Left ventricle myocardium superior (tissue), 1 donor: ENCODE measurements at regions of chr19 and their contacts with region 1.

Region 1: GRCh38 chr19:28466107-28467045 is 746.6 kb downstream of the UQCRFS1 start:
- DNase-seq: peak; percentile 74
- ATAC-seq: peak; percentile 50

Region 2: GRCh38 chr19:28633319-28634018 is 167.1 kb after region 1 on chr19:
- intact Hi-C with region 1: loop called (anchors 10 kb)
- DNase-seq: peak; percentile 56
- ATAC-seq: peak; percentile 67

Region 3: GRCh38 chr19:28710278-28710677 is 243.9 kb after region 1 on chr19:
- intact Hi-C with region 1: loop called (anchors 2 kb)
- DNase-seq: no peak
- ATAC-seq: no peak

Region 4: GRCh38 chr19:28878862-28879566 is 412.6 kb after region 1 on chr19:
- intact Hi-C with region 1: loop called (anchors 5 kb)
- DNase-seq: peak; percentile 73
- ATAC-seq: peak; percentile 24